Motor neuron (in vitro differentiated cells): ENCODE measurements at regions of chr14 and their contacts with region 1.

Region 1: DNA sequence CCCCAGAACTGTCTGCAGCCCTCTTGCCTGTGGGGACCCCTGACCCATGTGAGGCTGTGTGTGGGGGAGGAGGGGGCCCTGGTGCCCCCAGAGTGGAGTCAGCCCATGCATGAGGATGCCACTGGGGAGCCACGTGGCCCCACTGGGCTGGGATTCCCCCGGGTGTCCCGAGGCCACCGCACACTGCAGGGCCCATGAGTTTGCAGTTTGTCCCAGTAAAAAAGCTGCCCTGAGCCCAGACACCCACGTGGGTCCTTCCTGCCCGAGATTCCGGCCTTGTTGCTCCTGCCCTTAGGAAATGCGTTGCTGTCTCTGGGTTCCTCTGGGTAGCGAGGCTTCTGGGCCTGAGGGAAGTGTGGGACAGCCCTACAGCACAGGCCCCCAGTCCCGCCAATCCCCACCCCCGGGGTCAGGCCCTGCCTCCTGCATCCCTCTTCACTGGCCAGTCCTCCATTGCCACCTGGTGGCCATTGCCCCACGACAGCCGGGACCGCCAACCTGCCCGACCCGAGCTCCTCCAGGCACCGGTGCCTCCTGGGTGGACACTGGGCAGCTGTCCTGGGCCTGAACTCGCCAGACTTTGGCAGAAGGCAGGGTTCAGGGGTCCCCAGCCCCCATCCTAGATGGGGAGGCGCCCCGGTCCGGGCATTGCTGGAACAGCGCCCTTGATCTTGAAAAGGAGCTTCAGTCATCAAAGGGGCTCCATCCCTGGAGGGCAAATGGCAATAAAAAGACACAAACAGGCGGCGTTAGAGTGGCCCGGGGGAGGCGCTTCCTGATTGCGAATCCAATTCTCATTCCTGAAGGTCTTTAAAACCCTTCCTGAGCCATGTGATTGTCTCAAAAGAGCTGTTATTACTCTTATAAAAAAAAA is 15.6 kb upstream of the C14orf180 start:
- ATAC-seq: peak; percentile 72 to 94 (median 79)
- H3K4me3 ChIP-seq: no peak overlapping the region
- H3K27ac ChIP-seq: no peak overlapping the region
- H3K4me1 ChIP-seq: peaks cover 38 to 51% of the 10 kb centered on the region in 2 donors

Region 2: GRCh38 chr14:104137297-104138097 is 426.5 kb before region 1 on chr14:
- in situ Hi-C with region 1: loop called in 2 of 9 experiments (anchors 25 kb)
- ATAC-seq: peak; percentile 24 to 89 (median 30)
- H3K4me3 ChIP-seq: peak overlapping the region; percentile 60 to 85 (median 66)
- H3K27ac ChIP-seq: peak overlapping the region in 1 of 2 donors; percentile 60
- H3K4me1 ChIP-seq: peaks cover 44% of the 10 kb centered on the region in 2 donors